Activated naive CD4-positive, alpha-beta T cell treated with anti-CD3 and anti-CD28 coated beads for 36 hours (primary cell): ENCODE measurements at regions of chr13 and their contacts with region 1.

Region 1: GRCh38 chr13:23105051-23105450 is 75.7 kb upstream of the SGCG start:
- DNase-seq: no peak
- H3K4me3 Mint-ChIP-seq: no peak overlapping the region
- H3K27ac Mint-ChIP-seq: no peak overlapping the region
- H3K4me1 Mint-ChIP-seq: no peaks in the 10 kb centered on the region
- H3K27me3 Mint-ChIP-seq: peaks cover 12% of the 10 kb centered on the region

Region 2: GRCh38 chr13:23039266-23039935 is 65.7 kb before region 1 on chr13:
- CTCF ChIA-PET with region 1: no interaction called
- intact Hi-C with region 1: no loop called
- DNase-seq: no peak
- H3K4me3 Mint-ChIP-seq: no peak overlapping the region
- H3K27ac Mint-ChIP-seq: no peak overlapping the region
- H3K4me1 Mint-ChIP-seq: no peaks in the 10 kb centered on the region
- H3K27me3 Mint-ChIP-seq: no peaks in the 10 kb centered on the region

Region 3: DNA sequence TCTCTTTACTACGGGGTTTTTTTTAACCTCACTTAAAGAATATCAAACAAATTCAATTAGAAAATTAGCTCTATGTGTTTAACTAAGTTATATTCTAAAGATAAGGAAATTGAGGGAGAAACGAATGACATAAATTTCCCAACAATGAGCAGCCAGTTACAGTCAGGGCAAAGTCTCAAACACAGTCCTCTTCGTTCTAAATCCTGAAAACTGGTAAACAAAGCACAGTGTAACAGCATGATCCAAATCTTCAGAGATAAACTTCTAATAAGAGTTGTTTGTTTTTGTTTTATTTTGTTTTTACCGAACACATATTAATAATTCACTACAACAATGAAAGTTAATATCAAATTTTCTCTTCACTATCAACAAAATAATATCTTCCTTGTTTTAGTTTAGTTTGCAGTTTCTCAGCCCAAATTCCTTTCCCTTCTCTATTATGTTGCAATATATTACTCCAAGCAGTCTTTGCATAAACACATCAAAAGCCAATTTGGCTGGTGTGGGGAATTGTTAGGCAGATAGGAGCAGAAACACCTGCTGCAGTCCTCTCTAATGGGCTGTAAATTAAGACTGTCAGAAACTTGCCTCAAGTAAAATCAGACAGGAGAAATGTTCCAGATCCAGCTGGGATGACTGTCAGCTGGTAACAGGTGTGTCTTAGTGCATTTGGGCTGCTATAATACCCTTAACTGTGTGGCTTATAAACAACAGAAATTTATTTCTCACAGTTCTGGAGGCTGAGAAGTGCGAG is 30.8 kb before region 1 on chr13:
- CTCF ChIA-PET with region 1: no interaction called
- intact Hi-C with region 1: loop called (anchors 2 kb)
- DNase-seq: no peak
- H3K4me3 Mint-ChIP-seq: no peak overlapping the region
- H3K27ac Mint-ChIP-seq: no peak overlapping the region
- H3K4me1 Mint-ChIP-seq: no peaks in the 10 kb centered on the region
- H3K27me3 Mint-ChIP-seq: peaks cover 6% of the 10 kb centered on the region